GM18951 (cell line): ENCODE measurements at regions of chr13 and their contacts with region 1.

Region 1: DNA sequence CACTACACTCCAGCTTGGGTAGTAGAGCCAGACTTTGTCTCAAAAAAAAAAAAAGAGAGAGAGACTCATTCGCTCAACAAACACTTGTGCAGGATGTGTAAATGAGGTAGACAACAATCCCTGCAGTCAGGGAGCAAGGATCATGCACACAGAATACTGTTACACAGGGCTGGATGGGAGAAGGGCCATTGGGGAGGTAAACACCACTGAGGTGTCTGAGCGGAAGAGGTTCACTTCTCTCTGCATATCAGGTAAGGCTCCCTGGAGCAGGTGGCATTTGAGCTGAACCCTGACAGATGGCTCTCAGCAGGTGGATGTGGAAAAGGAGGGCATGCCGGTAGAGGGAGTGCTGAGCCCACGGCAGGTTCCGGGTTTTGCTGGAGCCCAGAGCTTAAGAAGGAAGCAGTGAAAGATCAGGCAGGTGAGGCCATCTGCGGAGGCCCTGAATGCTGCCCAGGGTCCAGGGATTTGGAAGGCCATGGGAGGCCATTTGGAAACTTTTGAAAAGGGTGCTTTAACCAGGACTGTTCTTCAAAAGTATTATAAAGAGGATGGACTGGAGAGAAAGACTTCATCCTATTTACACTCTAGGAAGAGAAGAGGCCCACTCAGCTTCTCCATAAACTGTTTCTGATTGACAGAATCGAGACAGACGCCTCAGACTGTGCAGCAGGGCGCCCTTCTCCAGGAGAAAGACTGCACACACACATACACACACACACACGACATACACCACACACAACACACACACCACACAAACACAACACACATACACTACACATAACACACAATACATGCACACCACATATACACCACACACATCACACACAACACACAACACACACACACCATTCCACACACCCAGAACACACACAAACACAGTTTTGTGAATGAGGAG is 199.4 kb downstream of the USP12 start:
- POLR2A ChIP-seq: no peak

Region 2: GRCh38 chr13:26061947-26062346 is 910.3 kb before region 1 on chr13:
- in situ Hi-C with region 1: no loop called
- POLR2A ChIP-seq: no peak

Region 3: DNA sequence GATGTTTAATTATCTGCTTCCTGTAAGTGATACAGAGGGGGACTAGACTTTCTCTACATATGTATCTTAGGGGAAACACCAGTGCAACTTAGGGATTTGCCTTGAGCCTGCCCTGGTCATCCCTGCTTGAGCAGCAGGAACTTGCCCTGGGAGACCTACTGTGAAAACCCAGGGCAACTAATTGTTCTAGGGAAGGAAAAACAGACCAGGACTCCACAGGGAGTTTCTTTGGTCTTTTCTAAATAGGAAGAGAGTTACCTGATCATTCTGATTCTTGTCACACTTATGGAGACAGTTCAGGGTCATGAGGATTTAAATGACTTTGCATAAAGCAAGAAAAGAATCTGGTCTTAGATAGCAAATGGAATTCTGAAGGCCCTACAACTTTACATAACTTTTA is 325.6 kb before region 1 on chr13:
- in situ Hi-C with region 1: no loop called
- POLR2A ChIP-seq: no peak

Region 4: DNA sequence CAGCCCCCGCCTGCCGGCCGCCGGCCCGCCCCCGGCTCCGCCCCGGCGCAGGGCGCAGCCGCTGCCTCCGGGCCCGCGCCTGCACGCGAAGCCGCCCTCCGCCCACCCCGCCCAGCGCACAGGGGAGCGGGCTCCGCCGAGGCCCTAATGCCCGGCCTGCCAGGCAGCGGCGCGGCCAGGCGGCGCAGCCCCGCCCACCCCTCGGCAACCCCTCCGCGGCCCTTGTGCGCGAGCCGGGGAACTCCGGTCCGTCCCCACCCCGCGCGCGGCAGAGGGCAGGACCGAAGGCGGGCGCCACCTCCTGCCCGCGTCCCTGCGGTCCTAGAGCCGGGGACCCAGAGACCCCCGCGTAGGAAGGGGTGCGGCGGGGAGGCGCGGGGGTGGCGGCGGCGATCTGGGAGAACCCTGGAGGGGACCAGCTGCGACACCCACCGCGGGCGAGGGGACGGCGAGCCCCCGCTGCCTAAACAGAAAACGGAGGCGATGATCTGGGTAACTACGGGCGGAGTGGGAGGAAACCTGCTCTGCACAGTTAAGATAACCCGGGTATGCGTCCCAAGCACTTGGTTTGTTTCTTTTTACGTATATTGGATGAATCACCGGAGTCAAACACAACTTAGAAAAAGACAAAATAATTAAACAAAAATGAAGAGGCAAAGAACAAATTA is 199.7 kb after region 1 on chr13:
- in situ Hi-C with region 1: no loop called
- POLR2A ChIP-seq: peak; percentile 56

Region 5: GRCh38 chr13:27997904-27998522 is 1025.8 kb after region 1 on chr13:
- in situ Hi-C with region 1: loop called (anchors 25 kb)
- POLR2A ChIP-seq: no peak